MCF 10A (cell line): ENCODE measurements at regions of chr2 and their contacts with region 1.

Region 1: DNA sequence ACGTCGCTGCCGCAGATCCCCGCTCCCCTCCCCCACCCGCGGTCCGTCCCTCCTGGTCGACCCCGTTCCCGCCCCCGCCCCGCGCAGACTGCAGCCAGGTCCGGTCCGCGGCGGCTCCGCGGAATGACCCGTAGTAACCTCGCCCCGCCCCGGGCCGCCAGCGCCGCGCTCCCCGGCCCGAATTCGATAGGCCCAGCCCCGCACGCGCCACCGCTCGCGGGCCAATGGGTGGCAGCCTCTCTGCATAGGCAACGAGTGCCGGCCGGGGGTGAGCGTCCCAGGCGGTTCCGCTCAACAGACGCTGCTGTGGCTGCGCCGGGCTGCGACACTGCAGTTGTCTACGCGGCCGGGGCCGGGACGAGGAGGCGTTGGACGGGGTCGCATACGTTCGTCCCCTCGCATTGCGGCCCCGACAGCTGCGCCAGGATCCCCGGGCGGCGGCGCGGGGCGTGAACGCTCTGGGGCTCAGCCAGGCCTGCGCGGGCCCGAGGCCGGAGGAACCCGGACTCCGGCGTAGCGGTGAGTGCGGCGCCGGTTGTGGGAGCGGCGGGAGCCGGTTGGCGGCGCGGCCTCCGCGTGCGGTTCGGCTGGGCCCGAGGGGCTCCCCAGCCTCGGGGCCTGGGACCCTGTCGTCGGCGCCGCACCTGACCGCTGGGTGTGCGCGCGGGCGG is at the start of gene ACSL3:
- DNase-seq: peak; percentile 96
- H3K4me3 Mint-ChIP-seq: no peak within 1 kb of the TSS
- H3K27ac Mint-ChIP-seq: peak within 1 kb of the TSS; percentile 66
- H3K4me1 Mint-ChIP-seq: peaks cover 14% of the 10 kb centered on the region
- H3K27me3 Mint-ChIP-seq: no peaks in the 10 kb centered on the region
- CTCF ChIP-seq: peak; percentile 4
- total RNA-seq, gene ACSL3: 183 and 203 TPM in 2 replicates

Region 2: DNA sequence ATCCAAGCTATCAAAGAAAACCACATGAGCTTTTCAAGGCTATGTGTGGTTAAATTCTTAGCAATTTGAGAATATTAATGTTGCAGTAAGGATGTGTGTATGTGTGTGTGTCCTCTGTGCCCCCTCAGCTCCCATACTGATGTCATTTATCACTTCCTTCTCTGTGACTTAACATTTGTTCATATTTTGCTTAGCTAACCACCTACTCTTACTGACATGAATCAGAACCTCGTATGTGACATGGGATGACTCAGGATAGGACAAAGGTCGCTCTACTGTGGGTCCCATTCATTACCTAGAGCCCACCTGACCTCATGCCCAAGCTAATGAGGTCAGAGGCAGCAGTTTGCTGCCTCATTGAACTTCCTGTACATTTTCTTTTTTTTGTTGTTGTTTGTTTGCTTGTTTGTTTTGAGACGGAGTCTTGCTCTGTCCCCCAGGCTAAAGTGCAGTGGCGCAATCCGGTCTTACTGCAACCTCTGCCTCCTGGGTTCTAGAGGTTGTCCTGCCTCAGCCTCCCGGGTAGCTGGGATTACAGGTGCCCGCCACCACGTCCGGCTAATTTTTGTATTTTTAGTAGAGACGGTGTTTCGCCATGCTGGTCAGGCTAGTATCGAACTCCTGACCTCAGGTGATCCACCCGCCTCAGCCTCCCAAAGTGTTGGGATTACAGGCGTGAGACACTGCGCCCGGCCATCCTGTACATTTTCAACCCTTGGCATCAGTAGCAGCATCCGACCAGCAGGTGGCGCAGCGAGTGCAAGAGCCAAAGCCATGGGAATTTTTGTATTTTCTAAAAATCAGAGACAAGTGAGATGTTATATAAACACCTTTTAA is 153.0 kb before region 1 on chr2:
- CTCF ChIA-PET with region 1: interaction called, 53 read pairs
- POLR2A ChIA-PET with region 1: interaction called, 26 read pairs
- intact Hi-C with region 1: loop called (anchors 1 kb)
- DNase-seq: peak; percentile 71
- H3K4me3 Mint-ChIP-seq: no peak overlapping the region
- H3K27ac Mint-ChIP-seq: no peak overlapping the region
- H3K4me1 Mint-ChIP-seq: peaks cover 5% of the 10 kb centered on the region
- H3K27me3 Mint-ChIP-seq: no peaks in the 10 kb centered on the region
- CTCF ChIP-seq: peak; percentile 90

Region 3: GRCh38 chr2:222805541-222806304 is 55.2 kb before region 1 on chr2:
- CTCF ChIA-PET with region 1: interaction called, 7 read pairs
- POLR2A ChIA-PET with region 1: interaction called, 98 read pairs
- intact Hi-C with region 1: loop called (anchors 2 kb)
- DNase-seq: peak; percentile 89
- H3K4me3 Mint-ChIP-seq: peak overlapping the region; percentile 39
- H3K27ac Mint-ChIP-seq: peak overlapping the region; percentile 96
- H3K4me1 Mint-ChIP-seq: peaks cover 10% of the 10 kb centered on the region
- H3K27me3 Mint-ChIP-seq: no peaks in the 10 kb centered on the region
- CTCF ChIP-seq: no peak

Region 4: GRCh38 chr2:222837511-222838056 is 23.3 kb before region 1 on chr2:
- CTCF ChIA-PET with region 1: interaction called, 14 read pairs
- POLR2A ChIA-PET with region 1: interaction called, 205 read pairs
- intact Hi-C with region 1: loop called (anchors 1 kb)
- DNase-seq: peak; percentile 94
- H3K4me3 Mint-ChIP-seq: peak overlapping the region; percentile 73
- H3K27ac Mint-ChIP-seq: peak overlapping the region; percentile 93
- H3K4me1 Mint-ChIP-seq: peaks cover 39% of the 10 kb centered on the region
- H3K27me3 Mint-ChIP-seq: no peaks in the 10 kb centered on the region
- CTCF ChIP-seq: no peak

Region 5: GRCh38 chr2:222878877-222879603 is 18.2 kb after region 1 on chr2:
- CTCF ChIA-PET with region 1: interaction called, 7 read pairs
- POLR2A ChIA-PET with region 1: interaction called, 240 read pairs
- intact Hi-C with region 1: loop called (anchors 2 kb)
- DNase-seq: peak; percentile 86
- H3K4me3 Mint-ChIP-seq: peak overlapping the region; percentile 39
- H3K27ac Mint-ChIP-seq: peak overlapping the region; percentile 74
- H3K4me1 Mint-ChIP-seq: peaks cover 45% of the 10 kb centered on the region
- H3K27me3 Mint-ChIP-seq: no peaks in the 10 kb centered on the region
- CTCF ChIP-seq: no peak